Heart right ventricle (tissue), 16 donors: ENCODE measurements at regions of chr1 and their contacts with region 1.

Region 1: DNA sequence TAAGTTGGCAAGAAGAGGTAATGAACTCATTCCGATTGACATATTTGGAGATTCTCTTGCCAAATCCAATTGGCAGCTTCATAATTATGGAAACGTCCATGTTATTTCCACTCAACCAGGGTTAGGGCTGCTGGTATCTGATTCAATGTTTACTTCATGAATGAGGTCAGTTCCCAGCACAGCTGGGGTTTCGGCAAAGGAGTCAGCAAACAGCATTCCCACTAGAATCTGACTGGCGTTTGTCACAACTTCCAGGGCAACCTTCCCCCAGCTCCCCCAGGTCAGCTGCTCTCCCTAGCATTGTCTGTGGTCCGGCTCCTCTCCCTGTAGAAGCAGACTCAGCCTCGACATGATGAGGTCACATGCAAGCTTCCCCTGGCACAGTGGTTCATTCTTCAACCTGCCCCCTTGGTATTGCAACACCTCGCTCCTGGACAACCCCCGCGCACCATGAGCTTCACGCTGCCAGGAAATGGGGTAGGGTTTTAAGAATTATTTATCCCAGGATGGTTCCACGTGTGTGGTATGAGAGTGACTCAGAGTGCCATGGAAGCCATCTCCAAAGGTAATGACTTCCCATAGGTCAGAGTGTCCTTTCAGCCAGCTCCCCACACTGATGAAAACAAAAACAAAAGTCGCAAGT is 100.7 kb upstream of the SLC25A33 start:
- DNase-seq: peak; percentile 26 to 32
- ATAC-seq: peak in 7 of 8 donors; percentile 15 to 62 (median 30)
- H3K4me3 ChIP-seq: no peak overlapping the region
- H3K27ac ChIP-seq: peak overlapping the region in 9 of 10 donors; percentile 9 to 91 (median 56)
- H3K4me1 ChIP-seq: peaks cover 5 to 91% (median 50%) of the 10 kb centered on the region in 9 donors
- H3K27me3 ChIP-seq: no peaks in the 10 kb centered on the region
- CTCF ChIP-seq: no peak

Region 2: DNA sequence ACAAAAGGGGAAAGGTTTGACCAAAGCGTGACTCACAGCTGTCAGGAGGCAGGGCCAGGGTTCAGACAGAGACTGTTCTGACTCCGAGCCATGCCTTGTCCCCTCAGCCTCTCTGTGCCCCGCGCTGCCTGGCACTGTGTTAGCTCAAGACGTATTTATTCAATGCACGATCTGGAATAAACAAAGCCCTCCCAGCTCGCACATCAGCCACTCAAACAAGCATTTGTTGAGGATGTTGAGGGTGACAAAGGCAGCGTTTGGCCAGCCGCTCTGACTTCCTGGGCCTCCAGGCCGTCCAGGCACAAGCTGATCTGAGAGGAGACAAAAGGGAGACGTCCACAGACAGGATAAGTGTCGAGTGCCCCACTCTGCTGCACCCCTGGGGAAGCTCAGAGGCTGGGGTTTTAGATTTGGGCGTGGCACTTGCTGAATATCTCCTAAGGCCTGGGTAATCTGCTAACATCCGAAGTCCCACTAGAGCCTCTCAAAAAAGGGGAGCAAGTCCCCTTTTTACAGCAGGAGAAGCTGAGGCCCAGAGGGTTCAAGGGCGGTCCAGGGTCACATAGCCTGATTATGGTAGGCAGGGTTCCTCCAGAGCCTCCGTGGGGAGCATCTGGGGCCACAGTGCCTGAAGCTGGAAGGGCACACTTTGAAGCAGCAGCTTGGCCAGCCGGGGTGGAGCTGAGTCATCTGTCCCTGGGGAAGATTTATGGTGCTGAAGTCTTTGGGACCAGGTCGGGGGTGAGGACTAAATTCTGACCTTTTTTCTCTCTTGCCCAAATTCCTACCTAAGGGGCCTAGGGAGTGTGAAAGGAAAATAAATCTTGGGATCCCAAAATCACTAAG is 50.0 kb before region 1 on chr1:
- intact Hi-C with region 1: loop called in 3 of 10 experiments (anchors 5 to 10 kb)
- DNase-seq: peak in 1 of 2 donors; percentile 38
- ATAC-seq: peak in 1 of 8 donors; percentile 45
- H3K4me3 ChIP-seq: no peak overlapping the region
- H3K27ac ChIP-seq: peak overlapping the region in 1 of 10 donors; percentile 31
- H3K4me1 ChIP-seq: peaks cover 7 to 34% (median 22%) of the 10 kb centered on the region in 9 donors
- H3K27me3 ChIP-seq: peaks cover 0 to 4% (median 0%) of the 10 kb centered on the region in 7 donors
- CTCF ChIP-seq: no peak

Region 3: GRCh38 chr1:9399510-9400424 is 38.8 kb before region 1 on chr1:
- intact Hi-C with region 1: loop called in 1 of 10 experiments (anchors 5 kb)
- DNase-seq: peak; percentile 54 to 60
- ATAC-seq: peak; percentile 39 to 79 (median 60)
- H3K4me3 ChIP-seq: no peak overlapping the region
- H3K27ac ChIP-seq: peak overlapping the region; percentile 60 to 84 (median 73)
- H3K4me1 ChIP-seq: peaks cover 18 to 47% (median 33%) of the 10 kb centered on the region in 9 donors
- H3K27me3 ChIP-seq: peaks cover 0 to 6% (median 0%) of the 10 kb centered on the region in 7 donors
- CTCF ChIP-seq: no peak

Region 4: DNA sequence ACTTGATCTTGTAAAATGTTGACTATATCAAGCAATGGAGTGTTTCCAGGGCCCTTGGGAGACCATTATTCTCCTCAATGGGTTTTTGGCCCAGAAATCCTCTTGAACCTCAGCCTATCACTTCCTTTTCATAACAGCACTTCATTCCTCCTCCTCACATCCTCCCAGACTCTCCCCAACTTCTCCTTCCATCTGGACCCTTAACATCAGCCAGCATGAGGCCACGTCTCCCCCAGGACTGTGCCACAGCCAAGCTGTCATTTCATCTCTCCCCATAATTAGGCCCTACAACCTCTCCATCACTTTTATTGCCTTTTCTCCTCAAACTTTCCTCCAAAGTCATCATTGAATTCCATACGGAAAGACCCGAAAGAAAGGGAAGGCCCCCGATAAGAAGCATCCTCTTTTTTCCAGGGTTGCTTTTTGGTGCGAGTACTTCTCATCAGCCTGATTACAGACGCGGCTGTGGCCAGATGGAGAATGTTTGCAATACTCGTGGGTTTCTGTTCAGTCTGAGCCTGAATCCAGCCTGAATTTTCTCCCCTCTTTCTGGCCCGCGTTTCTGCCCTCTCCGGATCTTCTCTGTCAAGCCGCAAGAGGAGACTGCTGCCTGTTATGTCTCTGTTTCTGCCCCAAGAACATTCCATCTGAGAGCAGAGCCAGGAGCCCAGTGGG is 48.1 kb after region 1 on chr1:
- intact Hi-C with region 1: loop called in 1 of 10 experiments (anchors 5 kb)
- DNase-seq: no peak
- ATAC-seq: peak in 1 of 8 donors; percentile 35
- H3K4me3 ChIP-seq: no peak overlapping the region
- H3K27ac ChIP-seq: peak overlapping the region in 3 of 10 donors; percentile 1 to 41 (median 12)
- H3K4me1 ChIP-seq: peaks cover 0 to 6% (median 0%) of the 10 kb centered on the region in 9 donors
- H3K27me3 ChIP-seq: peaks cover 0 to 6% (median 0%) of the 10 kb centered on the region in 7 donors
- CTCF ChIP-seq: no peak